K562 (cell line): ENCODE measurements at regions of chr5 and their contacts with region 1.

Region 1: GRCh38 chr5:160342403-160342941 is 28.0 kb downstream of the C1QTNF2 start:
- DNase-seq: no peak
- ATAC-seq: no peak
- H3K4me3 ChIP-seq: no peak overlapping the region
- H3K27ac ChIP-seq: no peak overlapping the region
- H3K4me1 ChIP-seq: peaks cover 4 to 7% of the 10 kb centered on the region in 2 experiments; a peak in 4 of 5 replicates
- H3K27me3 ChIP-seq: peaks cover 0 to 12% of the 10 kb centered on the region in 2 experiments; a peak in 2 of 5 replicates
- CTCF ChIP-seq: no peak
- EP300 ChIP-seq: no peak
- POLR2A ChIP-seq: no peak
- RAD21 ChIP-seq: no peak

Region 2: DNA sequence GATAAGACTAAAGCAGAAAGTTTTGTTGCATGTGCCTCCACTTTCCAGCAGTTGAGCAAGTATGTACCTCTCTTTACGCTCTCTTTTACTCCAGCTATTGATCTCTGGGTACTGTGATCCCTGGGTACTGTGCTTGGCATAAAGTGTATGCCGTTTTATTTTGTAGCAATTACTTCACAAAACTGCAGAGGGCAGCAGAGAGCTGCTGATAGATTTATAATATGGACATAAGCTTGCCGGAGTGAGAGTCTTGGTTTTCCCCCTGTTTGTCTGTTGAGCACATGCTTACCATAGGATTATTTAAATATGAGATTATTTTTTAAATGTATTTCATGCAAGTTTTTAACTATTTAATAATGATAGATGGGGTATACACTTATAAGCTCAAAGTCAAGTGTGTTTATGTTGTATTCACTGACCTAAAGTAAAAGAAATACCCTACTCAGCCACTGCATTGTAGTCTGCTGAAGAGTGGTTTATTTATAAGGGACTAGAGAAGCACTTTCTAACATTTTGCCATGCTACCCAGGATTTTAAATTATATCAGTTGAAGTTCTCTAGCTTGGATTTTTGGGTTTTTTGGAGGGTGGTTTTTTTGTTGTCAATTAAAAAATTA is 320.5 kb before region 1 on chr5:
- CTCF ChIA-PET with region 1: interaction called, 15 read pairs
- POLR2A ChIA-PET with region 1: interaction called, 3 read pairs
- in situ Hi-C with region 1: loop called (anchors 10 kb)
- intact Hi-C with region 1: loop called (anchors 1 kb)
- DNase-seq: peak; percentile 58 to 75 (median 62)
- ATAC-seq: peak; percentile 94
- H3K4me3 ChIP-seq: no peak overlapping the region
- H3K27ac ChIP-seq: no peak overlapping the region
- H3K4me1 ChIP-seq: no peaks in the 10 kb centered on the region
- H3K27me3 ChIP-seq: no peaks in the 10 kb centered on the region
- CTCF ChIP-seq: peak; percentile 72 to 85 (median 76)
- EP300 ChIP-seq: no peak
- POLR2A ChIP-seq: no peak
- RAD21 ChIP-seq: peak; percentile 78 to 83

Region 3: GRCh38 chr5:160082614-160083500 is 259.6 kb before region 1 on chr5:
- CTCF ChIA-PET with region 1: interaction called, 10 read pairs
- POLR2A ChIA-PET with region 1: interaction called, 3 read pairs
- in situ Hi-C with region 1: no loop called
- intact Hi-C with region 1: loop called (anchors 1 kb)
- DNase-seq: no peak
- ATAC-seq: no peak
- H3K4me3 ChIP-seq: no peak overlapping the region
- H3K27ac ChIP-seq: no peak overlapping the region
- H3K4me1 ChIP-seq: peaks cover 0 to 13% of the 10 kb centered on the region in 2 experiments; a peak in 3 of 5 replicates
- H3K27me3 ChIP-seq: no peaks in the 10 kb centered on the region
- CTCF ChIP-seq: no peak
- EP300 ChIP-seq: no peak
- POLR2A ChIP-seq: no peak
- RAD21 ChIP-seq: no peak

Region 4: DNA sequence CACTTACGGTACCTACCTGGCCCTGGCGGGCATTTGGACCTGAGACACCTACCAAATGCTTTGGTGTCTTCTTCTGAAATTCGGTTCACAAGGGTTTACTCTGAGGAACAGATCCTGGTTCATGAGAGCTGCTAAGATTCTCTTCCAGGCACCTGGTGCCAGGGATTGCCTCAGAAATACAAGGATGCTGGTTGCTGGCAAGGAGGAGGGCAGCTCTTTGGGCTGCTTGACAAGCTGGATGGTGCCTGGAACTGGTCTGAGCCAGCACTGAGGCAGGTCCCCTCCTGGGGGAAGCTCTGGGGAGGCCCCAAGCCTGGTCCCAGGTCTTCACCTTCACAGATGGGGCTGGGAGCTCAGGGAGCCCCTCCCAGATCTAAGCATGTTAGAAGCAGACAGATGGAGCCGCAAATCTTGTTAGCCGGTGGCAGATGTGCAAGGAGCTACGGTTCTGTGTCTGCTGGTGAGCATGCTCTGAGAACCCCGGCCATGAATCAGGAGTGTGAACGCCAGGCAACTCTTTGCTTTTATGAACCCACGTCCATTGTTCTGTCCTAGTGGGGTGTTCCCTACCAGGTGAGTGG is 96.9 kb before region 1 on chr5:
- CTCF ChIA-PET with region 1: interaction called, 3 read pairs
- POLR2A ChIA-PET with region 1: no interaction called
- in situ Hi-C with region 1: no loop called
- intact Hi-C with region 1: loop called (anchors 1 kb)
- DNase-seq: no peak
- ATAC-seq: no peak
- H3K4me3 ChIP-seq: no peak overlapping the region
- H3K27ac ChIP-seq: no peak overlapping the region
- H3K4me1 ChIP-seq: peaks cover 14 to 23% of the 10 kb centered on the region in 2 experiments; a peak in 4 of 5 replicates
- H3K27me3 ChIP-seq: peaks cover 0 to 29% of the 10 kb centered on the region in 2 experiments; a peak in 2 of 5 replicates
- CTCF ChIP-seq: no peak
- EP300 ChIP-seq: no peak
- POLR2A ChIP-seq: no peak
- RAD21 ChIP-seq: no peak

Region 5: DNA sequence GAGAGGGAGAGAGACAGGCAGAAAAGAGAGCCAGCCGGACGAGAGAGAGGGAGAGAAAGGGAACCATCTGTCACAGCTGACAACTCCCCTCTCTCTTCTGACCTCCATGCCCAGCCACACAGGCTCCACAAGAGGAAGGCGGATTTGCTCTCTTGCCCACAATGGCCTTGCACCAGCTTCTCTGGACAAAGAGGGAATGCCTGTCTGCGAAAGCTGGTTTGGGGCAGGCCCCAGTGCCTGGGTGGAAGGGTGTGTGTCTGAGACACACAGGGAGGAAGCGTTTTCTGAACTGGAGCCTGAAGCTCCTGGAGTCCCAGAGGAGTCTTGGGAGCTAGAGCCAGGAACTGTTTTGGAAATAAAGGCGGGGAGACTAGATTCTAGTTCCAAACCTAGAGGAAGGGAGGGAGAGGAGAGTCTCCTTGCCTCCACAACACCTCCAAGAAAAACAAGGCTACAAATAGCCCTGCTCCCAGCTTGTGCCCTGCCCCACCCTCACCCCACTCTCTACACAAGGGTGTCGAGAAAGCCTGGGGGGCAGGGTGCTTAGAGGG is 15.5 kb after region 1 on chr5:
- CTCF ChIA-PET with region 1: no interaction called
- POLR2A ChIA-PET with region 1: no interaction called
- in situ Hi-C with region 1: no loop called
- intact Hi-C with region 1: no loop called
- DNase-seq: no peak
- ATAC-seq: no peak
- H3K4me3 ChIP-seq: no peak overlapping the region
- H3K27ac ChIP-seq: no peak overlapping the region
- H3K4me1 ChIP-seq: peaks cover 0 to 6% of the 10 kb centered on the region in 2 experiments; a peak in 4 of 5 replicates
- H3K27me3 ChIP-seq: peaks cover 0 to 46% of the 10 kb centered on the region in 2 experiments; a peak in 4 of 5 replicates
- CTCF ChIP-seq: no peak
- EP300 ChIP-seq: no peak
- POLR2A ChIP-seq: no peak
- RAD21 ChIP-seq: no peak

Region 6: GRCh38 chr5:160390787-160391696 is 48.6 kb after region 1 on chr5:
- CTCF ChIA-PET with region 1: no interaction called
- POLR2A ChIA-PET with region 1: no interaction called
- in situ Hi-C with region 1: no loop called
- intact Hi-C with region 1: loop called (anchors 1 kb)
- DNase-seq: peak in 1 of 4 experiments; percentile 34
- ATAC-seq: peak; percentile 72
- H3K4me3 ChIP-seq: no peak overlapping the region
- H3K27ac ChIP-seq: no peak overlapping the region
- H3K4me1 ChIP-seq: no peaks in the 10 kb centered on the region
- H3K27me3 ChIP-seq: no peaks in the 10 kb centered on the region
- CTCF ChIP-seq: peak in 2 of 3 experiments; percentile 32 to 69; a peak in 3 of 6 replicates
- EP300 ChIP-seq: no peak
- POLR2A ChIP-seq: no peak
- RAD21 ChIP-seq: peak; percentile 74 to 81

Region 7: GRCh38 chr5:160555961-160556631 is 213.6 kb after region 1 on chr5:
- CTCF ChIA-PET with region 1: no interaction called
- POLR2A ChIA-PET with region 1: no interaction called
- in situ Hi-C with region 1: no loop called
- intact Hi-C with region 1: no loop called
- DNase-seq: no peak
- ATAC-seq: no peak
- H3K4me3 ChIP-seq: no peak overlapping the region
- H3K27ac ChIP-seq: no peak overlapping the region
- H3K4me1 ChIP-seq: no peaks in the 10 kb centered on the region
- H3K27me3 ChIP-seq: no peaks in the 10 kb centered on the region
- CTCF ChIP-seq: no peak
- EP300 ChIP-seq: no peak
- POLR2A ChIP-seq: no peak
- RAD21 ChIP-seq: no peak